Natural killer cell (primary cell): ENCODE measurements at regions of chr9 and their contacts with region 1.

Region 1: DNA sequence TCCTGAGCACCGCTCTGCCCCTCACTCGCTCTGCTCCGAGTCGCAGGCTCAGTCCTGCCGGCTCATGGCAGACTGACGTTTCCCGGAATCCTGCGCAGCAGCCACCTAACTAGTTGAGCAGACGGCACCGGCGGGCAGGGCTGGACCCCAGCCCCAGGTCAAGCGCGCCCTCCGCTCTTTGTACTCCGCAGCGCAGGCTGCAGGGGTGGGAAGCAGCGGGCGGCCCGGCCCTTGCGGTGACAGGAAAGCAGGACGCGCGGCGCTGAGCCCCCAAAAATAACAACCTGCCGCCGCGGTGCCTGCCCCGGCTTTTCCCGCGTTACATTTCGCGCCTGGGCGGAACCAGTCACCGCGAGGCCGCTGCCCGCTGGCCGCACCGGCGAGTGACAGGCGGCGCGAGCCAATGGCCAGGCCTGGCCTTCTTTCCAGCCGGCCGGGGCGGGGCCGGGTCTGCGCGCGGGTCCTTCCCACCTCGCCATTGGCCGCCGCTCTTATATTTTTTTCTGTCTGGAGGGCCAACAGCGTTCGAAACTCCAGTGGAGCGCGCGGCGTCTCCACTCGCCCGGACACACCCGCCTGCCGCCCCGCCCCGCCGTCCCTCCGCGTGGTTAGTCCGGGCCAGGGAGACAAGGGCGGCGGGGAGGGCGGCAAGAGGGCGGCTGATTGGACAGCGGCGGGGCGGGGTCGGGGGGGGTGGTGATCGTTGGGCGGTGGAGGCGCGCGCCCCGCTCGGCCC is at the start of gene ZNF367:
- DNase-seq: peak; percentile 88 to 91
- ATAC-seq: peak; percentile 72 to 88 (median 80)
- H3K4me3 ChIP-seq: peak within 1 kb of the TSS; percentile 86
- H3K4me3 Mint-ChIP-seq: peak within 1 kb of the TSS; percentile 90
- H3K27ac ChIP-seq: peak within 1 kb of the TSS; percentile 91
- H3K27ac Mint-ChIP-seq: peak within 1 kb of the TSS; percentile 92 to 97
- H3K4me1 ChIP-seq: peaks cover 35% of the 10 kb centered on the region
- H3K4me1 Mint-ChIP-seq: peaks cover 28 to 33% of the 10 kb centered on the region in 2 donors
- H3K27me3 ChIP-seq: no peaks in the 10 kb centered on the region
- H3K27me3 Mint-ChIP-seq: no peaks in the 10 kb centered on the region
- CTCF ChIP-seq: no peak
- total RNA-seq, gene ZNF367: 4.4 to 6.2 (median 4.5) TPM

Region 2: DNA sequence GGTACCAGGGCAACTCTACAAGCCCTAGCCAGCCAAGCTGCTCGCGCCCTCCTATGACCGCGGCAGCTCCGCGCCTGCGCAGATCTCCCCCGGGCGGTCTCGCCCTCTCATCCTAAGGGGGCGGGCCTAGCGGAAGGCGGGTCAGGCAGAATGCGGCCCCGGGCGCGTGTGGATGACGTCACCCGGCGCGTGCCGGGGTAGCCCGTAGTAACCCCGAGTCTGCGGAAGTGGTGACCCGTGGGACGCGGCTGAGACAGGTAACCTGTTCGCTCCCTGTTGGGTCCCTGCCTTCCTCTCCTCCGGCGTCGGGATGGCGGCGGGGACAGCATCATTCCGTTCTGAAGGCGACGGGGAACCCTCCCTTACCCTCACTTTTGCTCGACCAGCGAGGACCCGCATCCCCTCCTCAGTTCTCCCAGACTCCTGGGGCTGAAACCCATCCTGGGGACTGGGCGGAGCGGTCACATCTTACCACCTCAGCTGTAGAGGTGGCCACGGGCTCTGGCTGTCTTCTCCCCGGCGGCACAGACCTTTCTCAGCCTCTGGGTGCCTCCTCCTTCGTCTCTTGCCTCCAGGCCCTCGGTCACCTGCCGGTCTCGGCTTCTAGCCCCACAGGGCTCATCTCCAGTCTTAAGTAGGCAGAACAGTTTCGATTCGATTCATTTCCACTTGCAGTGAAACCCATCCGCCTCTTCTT is 1691.6 kb before region 1 on chr9 and contains the start of gene AOPEP:
- intact Hi-C with region 1: loop called (anchors 2 kb)
- DNase-seq: peak; percentile 99 to 100
- ATAC-seq: peak; percentile 95 to 99 (median 98)
- H3K4me3 ChIP-seq: peak within 1 kb of the TSS; percentile 93
- H3K4me3 Mint-ChIP-seq: peak within 1 kb of the TSS; percentile 96
- H3K27ac ChIP-seq: peak within 1 kb of the TSS; percentile 95
- H3K27ac Mint-ChIP-seq: peak within 1 kb of the TSS; percentile 95 to 99
- H3K4me1 ChIP-seq: peaks cover 11% of the 10 kb centered on the region
- H3K4me1 Mint-ChIP-seq: peaks cover 10 to 18% of the 10 kb centered on the region in 2 donors
- H3K27me3 ChIP-seq: no peaks in the 10 kb centered on the region
- H3K27me3 Mint-ChIP-seq: no peaks in the 10 kb centered on the region
- CTCF ChIP-seq: no peak
- total RNA-seq, gene AOPEP: 20.1 to 22.6 (median 20.6) TPM

Region 3: GRCh38 chr9:96383165-96383942 is 34.9 kb before region 1 on chr9 and contains the start of gene SLC35D2:
- intact Hi-C with region 1: loop called (anchors 5 kb)
- DNase-seq: peak; percentile 18 to 43
- ATAC-seq: peak; percentile 68 to 75 (median 72)
- H3K4me3 ChIP-seq: peak within 1 kb of the TSS; percentile 59
- H3K4me3 Mint-ChIP-seq: peak within 1 kb of the TSS; percentile 83
- H3K27ac ChIP-seq: no peak within 1 kb of the TSS
- H3K27ac Mint-ChIP-seq: peak within 1 kb of the TSS; percentile 61 to 80
- H3K4me1 ChIP-seq: peaks cover 21% of the 10 kb centered on the region
- H3K4me1 Mint-ChIP-seq: peaks cover 27 to 39% of the 10 kb centered on the region in 2 donors
- H3K27me3 ChIP-seq: no peaks in the 10 kb centered on the region
- H3K27me3 Mint-ChIP-seq: no peaks in the 10 kb centered on the region
- CTCF ChIP-seq: no peak
- total RNA-seq, gene SLC35D2: 13.4 to 18.9 (median 17.3) TPM

Region 4: DNA sequence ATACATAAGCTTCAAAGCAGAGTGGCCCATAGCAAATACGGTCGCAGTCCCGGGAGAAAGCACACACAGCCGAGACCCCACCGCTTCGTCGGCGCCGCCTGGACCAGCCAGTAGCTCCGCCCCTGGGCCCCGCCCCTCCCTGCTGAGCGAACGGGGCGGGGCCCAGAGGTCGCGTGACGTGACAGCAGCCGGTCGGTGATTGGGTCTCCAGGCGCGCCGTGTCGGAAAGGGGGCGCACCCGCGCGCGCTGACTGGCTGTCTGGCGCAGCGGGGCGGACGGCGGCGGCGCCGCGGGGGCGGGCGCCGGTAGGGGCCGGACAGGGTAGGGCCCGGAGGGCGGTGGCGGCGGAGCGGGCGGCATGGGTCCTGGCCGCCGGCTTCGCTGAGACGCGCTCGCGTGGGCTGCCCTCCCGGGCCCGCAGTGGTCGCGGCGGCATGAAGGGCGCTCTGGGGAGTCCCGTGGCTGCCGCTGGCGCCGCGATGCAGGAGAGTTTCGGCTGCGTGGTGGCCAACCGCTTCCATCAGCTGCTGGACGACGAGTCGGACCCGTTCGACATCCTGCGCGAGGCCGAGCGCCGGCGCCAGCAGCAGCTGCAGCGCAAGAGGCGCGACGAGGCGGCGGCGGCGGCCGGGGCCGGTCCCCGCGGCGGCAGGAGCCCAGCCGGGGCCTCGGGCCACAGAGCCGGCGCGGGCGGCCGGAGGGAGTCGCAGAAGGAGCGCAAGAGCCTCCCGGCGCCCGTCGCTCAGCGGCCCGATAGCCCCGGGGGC is 31.8 kb after region 1 on chr9 and contains the start of gene HABP4:
- intact Hi-C with region 1: loop called (anchors 1 kb)
- DNase-seq: peak; percentile 96 to 97
- ATAC-seq: peak; percentile 94 to 98 (median 94)
- H3K4me3 ChIP-seq: peak within 1 kb of the TSS; percentile 70
- H3K4me3 Mint-ChIP-seq: peak within 1 kb of the TSS; percentile 90
- H3K27ac ChIP-seq: peak within 1 kb of the TSS; percentile 17
- H3K27ac Mint-ChIP-seq: peak within 1 kb of the TSS; percentile 32 to 71
- H3K4me1 ChIP-seq: peaks cover 15% of the 10 kb centered on the region
- H3K4me1 Mint-ChIP-seq: peaks cover 6 to 25% of the 10 kb centered on the region in 2 donors
- H3K27me3 ChIP-seq: no peaks in the 10 kb centered on the region
- H3K27me3 Mint-ChIP-seq: peaks cover 14 to 28% of the 10 kb centered on the region in 2 donors
- CTCF ChIP-seq: no peak
- total RNA-seq, gene HABP4: 3.0 to 3.9 (median 3.6) TPM

Region 5: GRCh38 chr9:96654443-96655197 is 236.4 kb after region 1 on chr9:
- intact Hi-C with region 1: loop called (anchors 5 kb)
- DNase-seq: peak; percentile 78 to 93
- ATAC-seq: peak; percentile 82 to 89 (median 83)
- H3K4me3 ChIP-seq: peak overlapping the region; percentile 35
- H3K4me3 Mint-ChIP-seq: peak overlapping the region; percentile 93
- H3K27ac ChIP-seq: peak overlapping the region; percentile 68
- H3K27ac Mint-ChIP-seq: peak overlapping the region; percentile 92 to 96
- H3K4me1 ChIP-seq: peaks cover 11% of the 10 kb centered on the region
- H3K4me1 Mint-ChIP-seq: peaks cover 17 to 20% of the 10 kb centered on the region in 2 donors
- H3K27me3 ChIP-seq: no peaks in the 10 kb centered on the region
- H3K27me3 Mint-ChIP-seq: peaks cover 5 to 6% of the 10 kb centered on the region in 2 donors
- CTCF ChIP-seq: no peak